Naive thymus-derived CD4-positive, alpha-beta T cell (primary cell): ENCODE measurements at regions of chr11 and their contacts with region 1.

Region 1: DNA sequence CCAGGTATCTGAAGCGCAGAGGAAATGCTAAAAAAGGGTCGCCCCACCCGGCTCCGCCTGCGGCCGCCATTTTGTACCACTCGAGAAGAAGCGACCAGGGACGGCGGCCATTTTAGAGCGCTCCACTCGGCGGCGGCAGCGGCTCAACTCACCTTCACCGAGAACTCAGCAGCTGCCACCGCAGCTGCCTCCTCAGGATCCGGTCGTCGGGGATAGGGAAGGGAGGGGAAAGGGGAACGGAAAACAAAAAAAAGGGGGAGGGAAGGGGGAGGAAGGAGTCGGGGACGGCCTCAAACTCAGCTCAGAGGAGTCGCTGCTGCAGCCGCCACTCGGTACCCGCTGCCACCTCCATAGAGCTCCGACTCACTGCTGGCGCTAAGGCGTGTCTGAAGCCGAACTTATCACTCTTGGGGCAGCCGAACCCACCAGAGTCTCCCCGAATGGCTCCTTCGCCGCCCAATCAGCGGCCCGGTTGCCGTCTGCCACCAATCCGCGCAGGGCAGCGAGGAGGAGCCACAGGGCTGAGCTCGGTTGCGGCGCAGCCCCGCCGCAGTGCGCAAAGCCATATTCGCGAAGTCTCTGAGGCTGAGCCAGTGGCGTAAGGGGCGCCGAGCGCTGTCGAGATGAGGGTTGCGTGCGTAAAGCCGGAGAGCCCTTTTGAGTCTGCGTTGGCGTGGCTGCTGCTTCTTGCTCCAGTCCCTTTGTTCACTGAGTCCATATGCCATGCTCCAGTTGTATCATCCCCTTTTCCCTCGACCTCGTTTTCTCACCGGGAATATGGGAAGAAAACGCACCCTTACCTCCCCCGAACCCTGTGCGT is at the start of gene EIF4G2:
- DNase-seq: peak; percentile 97 to 99 (median 99)
- ATAC-seq: peak; percentile 95
- H3K4me3 ChIP-seq: peak within 1 kb of the TSS; percentile 98
- H3K4me3 Mint-ChIP-seq: peak within 1 kb of the TSS; percentile 93 to 98 (median 97)
- H3K27ac ChIP-seq: peak within 1 kb of the TSS; percentile 95
- H3K27ac Mint-ChIP-seq: peak within 1 kb of the TSS; percentile 95 to 99 (median 98)
- H3K4me1 ChIP-seq: peaks cover 29 to 37% of the 10 kb centered on the region in 2 donors
- H3K4me1 Mint-ChIP-seq: peaks cover 25 to 53% (median 43%) of the 10 kb centered on the region in 7 donors
- H3K27me3 ChIP-seq: no peaks in the 10 kb centered on the region
- H3K27me3 Mint-ChIP-seq: peaks cover 0 to 5% (median 0%) of the 10 kb centered on the region in 5 donors
- total RNA-seq, gene EIF4G2: 596 to 843 (median 720) TPM

Region 2: GRCh38 chr11:10540923-10541560 is 267.7 kb before region 1 on chr11 and contains the start of gene RNF141:
- CTCF ChIA-PET with region 1: no interaction called
- POLR2A ChIA-PET with region 1: interaction called, 4 read pairs
- intact Hi-C with region 1: loop called in 1 of 2 experiments (anchors 2 kb)
- DNase-seq: peak; percentile 87 to 99 (median 94)
- ATAC-seq: peak; percentile 99
- H3K4me3 ChIP-seq: peak within 1 kb of the TSS; percentile 81
- H3K4me3 Mint-ChIP-seq: peak within 1 kb of the TSS; percentile 86 to 93 (median 90)
- H3K27ac ChIP-seq: peak within 1 kb of the TSS; percentile 90
- H3K27ac Mint-ChIP-seq: peak within 1 kb of the TSS; percentile 68 to 95 (median 86)
- H3K4me1 ChIP-seq: peaks cover 0 to 8% of the 10 kb centered on the region in 2 donors
- H3K4me1 Mint-ChIP-seq: peaks cover 9 to 37% (median 27%) of the 10 kb centered on the region in 7 donors
- H3K27me3 ChIP-seq: no peaks in the 10 kb centered on the region
- H3K27me3 Mint-ChIP-seq: no peaks in the 10 kb centered on the region
- total RNA-seq, gene RNF141: 11.9 to 22.7 (median 17.3) TPM

Region 3: DNA sequence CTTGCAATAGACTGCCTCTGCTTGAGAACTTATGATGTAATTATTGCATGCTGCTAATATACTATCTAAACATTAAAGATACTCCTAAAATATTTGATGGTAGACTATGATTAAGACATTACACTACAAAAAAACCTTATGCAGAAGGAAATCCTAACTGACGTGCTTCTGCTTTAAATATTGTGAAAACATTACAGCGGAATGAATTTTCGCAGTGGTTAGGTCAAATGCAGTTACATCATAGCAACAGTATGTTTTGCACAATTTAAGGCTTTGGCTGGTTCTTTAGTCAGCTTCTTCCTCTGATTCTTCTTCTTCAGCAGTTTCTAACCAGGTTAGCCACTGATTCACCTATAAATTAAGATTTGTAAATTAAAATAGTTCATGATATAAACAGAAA is 11.2 kb before region 1 on chr11:
- CTCF ChIA-PET with region 1: interaction called, 18 read pairs
- POLR2A ChIA-PET with region 1: interaction called, 88 read pairs
- intact Hi-C with region 1: loop called (anchors 1 kb)
- DNase-seq: no peak
- ATAC-seq: peak; percentile 42
- H3K4me3 ChIP-seq: no peak overlapping the region
- H3K4me3 Mint-ChIP-seq: no peak overlapping the region
- H3K27ac ChIP-seq: no peak overlapping the region
- H3K27ac Mint-ChIP-seq: peak overlapping the region in 4 of 9 donors; percentile 25 to 84 (median 56)
- H3K4me1 ChIP-seq: peaks cover 33 to 58% of the 10 kb centered on the region in 2 donors
- H3K4me1 Mint-ChIP-seq: peaks cover 47 to 72% (median 65%) of the 10 kb centered on the region in 7 donors
- H3K27me3 ChIP-seq: no peaks in the 10 kb centered on the region
- H3K27me3 Mint-ChIP-seq: peaks cover 0 to 6% (median 3%) of the 10 kb centered on the region in 5 donors

Region 4: GRCh38 chr11:10847960-10848870 is 39.5 kb after region 1 on chr11:
- CTCF ChIA-PET with region 1: interaction called, 3 read pairs
- POLR2A ChIA-PET with region 1: interaction called, 416 read pairs
- intact Hi-C with region 1: no loop called
- DNase-seq: no peak
- ATAC-seq: no peak
- H3K4me3 ChIP-seq: no peak overlapping the region
- H3K4me3 Mint-ChIP-seq: no peak overlapping the region
- H3K27ac ChIP-seq: no peak overlapping the region
- H3K27ac Mint-ChIP-seq: peak overlapping the region in 5 of 9 donors; percentile 33 to 76 (median 45)
- H3K4me1 ChIP-seq: no peaks in the 10 kb centered on the region
- H3K4me1 Mint-ChIP-seq: peaks cover 6 to 40% (median 21%) of the 10 kb centered on the region in 7 donors
- H3K27me3 ChIP-seq: no peaks in the 10 kb centered on the region
- H3K27me3 Mint-ChIP-seq: no peaks in the 10 kb centered on the region

Region 5: DNA sequence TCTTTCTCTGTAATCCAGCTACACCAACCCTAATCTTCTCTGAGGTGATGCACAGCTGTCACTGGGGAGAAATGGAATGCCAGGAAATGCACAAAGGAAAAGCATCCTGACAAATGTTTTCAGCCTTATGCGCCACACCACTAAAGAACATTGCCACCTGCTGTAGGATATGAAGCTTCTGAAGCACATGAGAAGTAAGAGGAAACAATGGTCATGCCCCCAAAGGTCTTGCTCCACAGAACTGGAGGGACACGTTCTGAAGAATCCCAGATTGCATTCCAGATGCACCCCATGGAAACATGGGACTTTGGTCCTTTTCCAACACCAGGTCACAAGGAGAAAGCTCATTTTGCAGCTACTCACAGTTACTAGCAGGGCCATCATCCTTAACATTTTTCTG is 97.8 kb after region 1 on chr11:
- CTCF ChIA-PET with region 1: interaction called, 3 read pairs
- POLR2A ChIA-PET with region 1: interaction called, 10 read pairs
- intact Hi-C with region 1: no loop called
- DNase-seq: no peak
- ATAC-seq: no peak
- H3K4me3 ChIP-seq: no peak overlapping the region
- H3K4me3 Mint-ChIP-seq: no peak overlapping the region
- H3K27ac ChIP-seq: no peak overlapping the region
- H3K27ac Mint-ChIP-seq: peak overlapping the region in 1 of 9 donors; percentile 25
- H3K4me1 ChIP-seq: no peaks in the 10 kb centered on the region
- H3K4me1 Mint-ChIP-seq: peaks cover 0 to 5% (median 0%) of the 10 kb centered on the region in 7 donors
- H3K27me3 ChIP-seq: no peaks in the 10 kb centered on the region
- H3K27me3 Mint-ChIP-seq: peaks cover 0 to 16% (median 12%) of the 10 kb centered on the region in 5 donors

Region 6: GRCh38 chr11:11036848-11037732 is 228.3 kb after region 1 on chr11:
- CTCF ChIA-PET with region 1: no interaction called
- POLR2A ChIA-PET with region 1: no interaction called
- intact Hi-C with region 1: no loop called
- DNase-seq: peak in 7 of 9 donors; percentile 33 to 63 (median 56)
- ATAC-seq: peak; percentile 86
- H3K4me3 ChIP-seq: no peak overlapping the region
- H3K4me3 Mint-ChIP-seq: peak overlapping the region in 5 of 10 donors; percentile 2 to 46 (median 8)
- H3K27ac ChIP-seq: no peak overlapping the region
- H3K27ac Mint-ChIP-seq: peak overlapping the region in 8 of 9 donors; percentile 50 to 93 (median 64)
- H3K4me1 ChIP-seq: peaks cover 0 to 15% of the 10 kb centered on the region in 2 donors
- H3K4me1 Mint-ChIP-seq: peaks cover 0 to 38% (median 25%) of the 10 kb centered on the region in 7 donors
- H3K27me3 ChIP-seq: no peaks in the 10 kb centered on the region
- H3K27me3 Mint-ChIP-seq: peaks cover 0 to 5% (median 0%) of the 10 kb centered on the region in 5 donors

Region 7: DNA sequence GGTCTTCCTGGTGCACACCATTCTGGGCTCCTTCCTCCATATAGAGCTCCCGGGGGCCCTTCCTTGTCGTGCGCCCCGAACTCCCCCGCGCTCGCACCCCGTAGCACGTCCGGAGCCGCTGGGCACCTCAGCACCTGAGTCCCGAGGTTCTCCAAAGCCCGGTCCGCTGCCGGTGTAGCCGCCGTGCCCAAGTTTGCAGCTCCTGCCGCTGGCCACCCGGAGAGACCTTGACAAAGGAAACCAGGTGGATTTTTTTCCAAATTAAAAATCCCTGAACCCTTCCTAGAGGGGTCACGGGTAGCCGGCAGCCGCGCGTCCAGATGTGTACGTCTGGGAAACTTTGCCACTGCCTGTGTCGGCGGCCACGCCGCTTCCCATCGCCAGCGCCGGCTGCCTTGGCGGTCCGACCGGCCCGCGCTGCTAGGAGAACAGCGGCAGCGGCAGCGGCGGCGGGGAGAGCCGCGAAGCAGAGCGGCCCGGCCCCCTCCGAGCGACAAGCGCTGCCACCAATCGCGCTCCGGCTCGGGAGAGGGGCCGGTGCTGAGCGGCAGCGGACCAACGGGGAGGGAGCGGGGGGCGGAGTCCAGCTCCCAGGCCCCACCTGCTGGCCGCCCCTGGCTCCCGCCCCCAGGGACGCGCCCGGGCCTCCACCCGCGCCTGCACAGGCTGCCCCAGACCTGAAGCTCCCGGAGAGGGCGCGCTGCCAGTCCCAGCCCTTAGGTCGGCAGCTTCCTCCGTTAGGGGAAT is 813.0 kb after region 1 on chr11 and contains the start of gene GALNT18:
- CTCF ChIA-PET with region 1: no interaction called
- POLR2A ChIA-PET with region 1: no interaction called
- intact Hi-C with region 1: loop called in 1 of 2 experiments (anchors 5 kb)
- DNase-seq: peak; percentile 11 to 89 (median 27)
- ATAC-seq: peak; percentile 95
- H3K4me3 ChIP-seq: peak within 1 kb of the TSS; percentile 17
- H3K4me3 Mint-ChIP-seq: peak within 1 kb of the TSS in 9 of 10 donors; percentile 57 to 89 (median 65)
- H3K27ac ChIP-seq: no peak within 1 kb of the TSS
- H3K27ac Mint-ChIP-seq: no peak within 1 kb of the TSS
- H3K4me1 ChIP-seq: peaks cover 0 to 7% of the 10 kb centered on the region in 2 donors
- H3K4me1 Mint-ChIP-seq: peaks cover 0 to 15% (median 8%) of the 10 kb centered on the region in 7 donors
- H3K27me3 ChIP-seq: peaks cover 3 to 6% of the 10 kb centered on the region in 2 donors
- H3K27me3 Mint-ChIP-seq: peaks cover 30 to 66% (median 45%) of the 10 kb centered on the region in 5 donors
- total RNA-seq, gene GALNT18: 0.20 to 1.7 TPM in 2 of 5 experiments, not detected in the others